ENCODE measurements at regions of chr10 and their contacts with region 1.

Region 1: DNA sequence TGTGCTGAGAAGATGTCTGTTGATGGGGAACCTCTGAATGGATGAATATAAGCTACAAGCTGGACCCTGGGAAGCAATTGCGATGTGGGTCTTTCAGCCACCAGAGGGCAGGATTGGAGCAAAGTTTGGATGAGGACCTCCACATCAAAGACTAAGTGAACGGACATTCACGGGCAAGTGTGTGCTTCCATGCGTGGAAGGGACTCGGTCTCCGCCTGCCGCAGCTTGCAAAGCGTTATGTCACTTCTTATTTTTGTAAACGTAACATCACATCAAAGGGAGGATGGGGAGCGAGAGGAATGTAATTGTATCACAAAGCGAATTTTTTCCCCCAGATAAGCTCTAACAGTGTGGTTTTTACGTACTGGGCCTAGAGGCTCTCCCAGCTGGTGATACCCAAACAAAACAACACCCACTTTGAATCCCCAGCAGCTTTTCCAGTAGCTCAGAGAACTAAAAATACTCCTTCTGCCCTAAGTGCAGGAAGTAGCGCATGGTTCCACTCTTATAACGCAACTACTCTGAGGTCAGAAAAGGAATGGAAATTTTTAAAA is 65.0 kb downstream of the VWA2 start:
- DNase-seq: peak; percentile 85
- ATAC-seq: peak; percentile 82
- H3K4me3 ChIP-seq: peak overlapping the region; percentile 24 to 41
- H3K27ac ChIP-seq: peak overlapping the region; percentile 13; the same call in 1 of the 2 replicates
- H3K4me1 ChIP-seq: peaks cover 6 to 19% of the 10 kb centered on the region in 2 experiments
- H3K27me3 ChIP-seq: peaks cover 26% of the 10 kb centered on the region; the same call in 1 of the 2 replicates
- CTCF ChIP-seq: peak; percentile 91 to 97 (median 97)
- POLR2A ChIP-seq: no peak
- RAD21 ChIP-seq: peak; percentile 100

Region 2: DNA sequence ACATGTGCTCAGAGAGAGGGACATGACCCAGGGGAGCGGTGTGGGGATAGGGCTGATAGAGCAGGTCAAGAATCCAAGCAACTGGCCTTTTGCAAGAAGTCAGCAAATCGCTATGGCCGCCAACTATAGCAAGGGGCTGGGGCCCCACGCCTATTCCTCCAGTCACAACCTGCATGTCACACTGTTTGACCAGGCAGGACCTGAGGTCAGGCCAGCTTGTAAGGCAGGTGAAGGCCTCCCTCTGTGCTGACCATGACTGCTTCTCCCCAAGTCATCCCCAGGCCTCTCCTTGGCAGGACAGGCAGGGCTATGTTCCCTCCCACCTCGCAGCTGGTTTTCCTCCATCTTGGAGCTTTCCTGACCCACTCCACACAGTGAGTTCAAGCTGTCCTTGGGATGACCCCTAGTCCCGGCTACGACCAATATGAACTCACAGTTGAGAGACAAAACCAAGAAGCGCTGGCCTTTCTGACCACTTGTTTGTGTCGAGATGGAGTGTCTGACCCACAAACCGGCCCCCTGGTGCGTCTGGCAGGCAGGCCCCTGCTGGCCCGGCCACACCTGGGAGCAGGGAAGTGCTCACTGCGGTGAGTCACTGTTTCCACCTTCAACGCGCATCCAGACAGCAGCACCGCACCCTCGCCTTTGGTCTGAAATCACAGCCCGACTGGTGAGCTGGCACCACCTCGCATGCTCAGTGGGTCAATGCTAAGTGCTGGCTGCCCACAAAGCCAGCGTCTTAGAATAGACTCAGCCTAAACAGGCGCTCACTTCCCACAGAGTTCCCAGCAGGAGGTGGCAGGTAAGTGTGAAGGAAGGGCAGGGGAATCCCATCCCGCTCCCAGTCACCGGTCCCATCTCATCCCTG is 16.4 kb after region 1 on chr10:
- CTCF ChIA-PET with region 1: interaction called, 18 read pairs
- POLR2A ChIA-PET with region 1: interaction called, 4 read pairs
- RAD21 ChIA-PET with region 1: no interaction called
- intact Hi-C with region 1: loop called (anchors 1 kb)
- DNase-seq: peak; percentile 100
- ATAC-seq: peak; percentile 93
- H3K4me3 ChIP-seq: peak overlapping the region; percentile 11 to 21; a peak in 2 of 4 replicates
- H3K27ac ChIP-seq: no peak overlapping the region; the same call in 1 of the 2 replicates
- H3K4me1 ChIP-seq: peaks cover 18 to 33% of the 10 kb centered on the region in 2 experiments
- H3K27me3 ChIP-seq: peaks cover 86% of the 10 kb centered on the region
- CTCF ChIP-seq: no peak
- POLR2A ChIP-seq: no peak
- RAD21 ChIP-seq: peak; percentile 41

Region 3: DNA sequence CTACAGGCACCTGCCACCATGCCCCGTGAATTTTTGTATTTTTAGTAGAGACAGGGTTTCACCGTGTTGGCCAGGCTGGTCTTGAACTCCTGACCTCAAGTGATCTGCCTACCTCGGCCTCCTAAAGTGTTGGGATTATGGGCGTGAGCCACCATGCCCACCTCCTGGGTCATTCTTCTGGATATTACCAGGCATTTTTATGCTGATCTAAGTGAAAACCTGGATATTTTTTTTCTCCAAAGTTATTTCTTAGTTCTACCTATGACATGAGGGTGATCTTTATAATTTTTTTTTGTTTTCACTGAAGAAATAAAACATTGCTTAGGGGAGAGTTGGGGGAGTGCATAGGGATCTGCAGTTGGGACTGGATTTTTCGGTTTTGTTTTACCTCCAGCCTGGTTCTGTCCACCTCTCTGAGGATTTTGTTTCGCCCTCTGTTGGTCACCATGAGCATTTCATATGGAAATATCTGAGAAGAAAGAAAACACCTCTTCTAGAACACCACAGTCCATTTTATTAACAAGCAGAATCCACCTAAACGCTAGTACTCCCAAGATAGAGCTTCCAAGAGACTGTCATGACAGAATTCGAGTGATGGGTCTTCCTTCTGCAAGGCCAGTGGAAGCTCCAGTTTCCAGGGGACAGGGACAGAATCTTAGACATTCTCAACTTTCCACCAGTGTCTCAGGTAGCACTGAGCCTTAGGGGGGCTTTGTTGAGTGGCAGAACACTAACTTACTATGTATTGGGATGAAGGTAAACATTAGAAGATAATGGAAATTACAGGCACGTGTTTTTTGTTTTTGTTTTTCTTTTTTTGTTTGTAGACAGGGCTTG is 133.6 kb after region 1 on chr10:
- CTCF ChIA-PET with region 1: interaction called, 45 read pairs
- POLR2A ChIA-PET with region 1: no interaction called
- RAD21 ChIA-PET with region 1: interaction called in 1 of 2 experiments, 3 read pairs
- intact Hi-C with region 1: loop called (anchors 1 kb)
- DNase-seq: no peak
- ATAC-seq: peak; percentile 81
- H3K4me3 ChIP-seq: no peak overlapping the region
- H3K27ac ChIP-seq: no peak overlapping the region
- H3K4me1 ChIP-seq: no peaks in the 10 kb centered on the region
- H3K27me3 ChIP-seq: no peaks in the 10 kb centered on the region
- CTCF ChIP-seq: peak; percentile 68 to 78 (median 71); a peak in 5 of 6 replicates
- POLR2A ChIP-seq: no peak
- RAD21 ChIP-seq: peak; percentile 73

Region 4: DNA sequence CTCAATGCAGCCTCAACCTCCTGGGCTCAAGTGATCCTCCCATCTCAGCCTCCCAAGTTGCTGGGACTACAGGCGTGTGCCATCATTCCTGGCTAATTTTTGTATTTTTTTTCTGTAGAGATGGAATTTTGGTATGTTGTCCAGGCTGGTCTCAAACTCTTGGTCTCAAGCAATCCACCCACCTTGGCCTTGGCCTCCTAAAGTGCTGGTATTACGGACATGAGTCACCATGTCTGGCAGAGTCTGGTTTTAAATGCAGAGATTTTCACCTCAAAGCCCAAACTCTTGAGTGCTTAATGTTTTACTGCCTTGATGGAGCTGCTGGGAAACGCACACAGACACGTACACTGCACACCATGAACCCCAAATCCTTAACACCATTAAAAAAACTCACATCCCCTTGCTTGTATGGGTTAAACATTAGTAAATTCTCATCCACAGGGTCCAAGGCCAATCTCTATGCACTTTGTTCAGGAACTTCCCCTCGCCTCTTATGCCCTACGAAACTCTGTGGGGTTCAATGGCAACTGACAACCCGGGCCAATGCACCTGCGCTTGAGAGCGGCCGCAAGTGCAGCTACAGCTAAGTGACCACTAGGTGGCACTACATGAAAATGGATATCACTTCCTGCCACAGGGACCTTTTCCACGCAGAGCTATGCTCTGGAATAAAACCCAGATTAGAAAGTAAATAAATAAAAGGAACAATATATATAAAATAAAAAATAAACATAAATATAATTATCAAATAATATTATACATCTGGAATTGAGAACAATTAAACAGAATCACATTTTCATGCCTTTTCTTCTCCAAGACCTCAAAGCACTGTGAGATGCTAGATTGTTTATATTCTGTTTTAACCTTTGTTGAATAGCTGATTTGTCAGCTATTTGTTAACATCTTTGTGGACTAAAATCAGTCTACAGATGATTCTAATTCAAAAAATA is 167.1 kb after region 1 on chr10:
- CTCF ChIA-PET with region 1: interaction called, 32 read pairs
- POLR2A ChIA-PET with region 1: no interaction called
- RAD21 ChIA-PET with region 1: interaction called, 6 to 9 read pairs
- intact Hi-C with region 1: no loop called
- DNase-seq: peak; percentile 62
- ATAC-seq: peak; percentile 96
- H3K4me3 ChIP-seq: no peak overlapping the region
- H3K27ac ChIP-seq: no peak overlapping the region
- H3K4me1 ChIP-seq: peaks cover 9 to 10% of the 10 kb centered on the region in 2 experiments; a peak in 2 of 4 replicates
- H3K27me3 ChIP-seq: no peaks in the 10 kb centered on the region
- CTCF ChIP-seq: peak; percentile 94 to 97 (median 96)
- POLR2A ChIP-seq: no peak
- RAD21 ChIP-seq: peak; percentile 94

Region 5: DNA sequence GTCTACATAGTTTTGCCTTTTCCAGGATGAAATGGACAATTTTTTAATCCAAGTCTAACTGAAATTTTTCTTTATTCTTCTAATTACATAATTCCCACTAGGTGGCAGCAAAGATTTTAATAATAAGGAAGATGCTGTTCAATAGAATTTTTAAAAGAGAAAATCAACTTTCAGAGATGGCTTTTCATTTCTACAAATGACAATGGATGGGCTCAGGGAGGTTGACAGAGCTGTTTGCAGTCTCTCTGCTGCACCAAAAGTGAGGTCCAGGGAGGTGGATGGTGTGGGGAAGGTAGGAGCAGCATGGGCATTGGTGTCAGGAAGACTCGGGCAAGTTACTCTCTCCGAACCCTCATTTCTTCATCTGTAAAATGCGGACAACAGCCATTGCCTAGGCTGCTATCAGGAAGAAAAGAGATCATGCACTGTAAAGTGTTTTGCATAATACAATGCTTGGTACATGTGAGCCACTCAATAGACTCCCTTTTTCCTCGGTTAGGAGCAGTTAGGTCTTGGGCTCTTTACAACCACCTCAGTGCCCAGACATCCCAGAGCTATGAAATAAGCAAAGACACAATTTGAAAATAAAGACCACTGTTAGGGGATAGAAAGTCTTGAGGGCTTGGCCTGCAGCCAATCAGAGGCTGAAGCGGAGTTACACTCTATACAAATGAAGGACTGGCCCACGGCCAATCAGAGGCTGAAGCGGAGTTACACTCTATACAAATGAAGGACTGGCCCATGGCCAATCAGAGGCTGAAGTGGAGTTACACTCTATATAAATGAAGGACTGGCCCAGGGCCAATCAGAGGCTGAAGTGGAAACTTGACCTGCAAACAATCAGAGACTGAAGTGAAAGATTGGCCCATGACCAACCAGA is 246.9 kb after region 1 on chr10:
- CTCF ChIA-PET with region 1: interaction called, 59 read pairs
- POLR2A ChIA-PET with region 1: interaction called, 3 read pairs
- RAD21 ChIA-PET with region 1: interaction called, 7 to 11 read pairs
- intact Hi-C with region 1: loop called (anchors 1 kb)
- DNase-seq: peak; percentile 32
- ATAC-seq: no peak
- H3K4me3 ChIP-seq: no peak overlapping the region
- H3K27ac ChIP-seq: no peak overlapping the region
- H3K4me1 ChIP-seq: no peaks in the 10 kb centered on the region; a peak in 1 of 4 replicates
- H3K27me3 ChIP-seq: no peaks in the 10 kb centered on the region
- CTCF ChIP-seq: peak; percentile 11 to 95 (median 78); a peak in 4 of 6 replicates
- POLR2A ChIP-seq: no peak
- RAD21 ChIP-seq: peak; percentile 91

Region 6: GRCh38 chr10:115129752-115130151 is 825.7 kb after region 1 on chr10:
- CTCF ChIA-PET with region 1: interaction called, 35 read pairs
- POLR2A ChIA-PET with region 1: no interaction called
- RAD21 ChIA-PET with region 1: interaction called in 1 of 2 experiments, 6 read pairs
- intact Hi-C with region 1: loop called (anchors 1 kb)
- DNase-seq: peak; percentile 43
- ATAC-seq: peak; percentile 58
- H3K4me3 ChIP-seq: no peak overlapping the region
- H3K27ac ChIP-seq: no peak overlapping the region
- H3K4me1 ChIP-seq: no peaks in the 10 kb centered on the region
- H3K27me3 ChIP-seq: no peaks in the 10 kb centered on the region
- CTCF ChIP-seq: peak in 2 of 3 experiments; percentile 52 to 55; a peak in 3 of 6 replicates
- POLR2A ChIP-seq: no peak
- RAD21 ChIP-seq: peak; percentile 79

Measured in HCT116 (cell line).